Activated CD4-positive, alpha-beta memory T cell treated with anti-CD3 and anti-CD28 coated beads for 36 hours (primary cell): ENCODE measurements at regions of chr2 and their contacts with region 1.

Region 1: DNA sequence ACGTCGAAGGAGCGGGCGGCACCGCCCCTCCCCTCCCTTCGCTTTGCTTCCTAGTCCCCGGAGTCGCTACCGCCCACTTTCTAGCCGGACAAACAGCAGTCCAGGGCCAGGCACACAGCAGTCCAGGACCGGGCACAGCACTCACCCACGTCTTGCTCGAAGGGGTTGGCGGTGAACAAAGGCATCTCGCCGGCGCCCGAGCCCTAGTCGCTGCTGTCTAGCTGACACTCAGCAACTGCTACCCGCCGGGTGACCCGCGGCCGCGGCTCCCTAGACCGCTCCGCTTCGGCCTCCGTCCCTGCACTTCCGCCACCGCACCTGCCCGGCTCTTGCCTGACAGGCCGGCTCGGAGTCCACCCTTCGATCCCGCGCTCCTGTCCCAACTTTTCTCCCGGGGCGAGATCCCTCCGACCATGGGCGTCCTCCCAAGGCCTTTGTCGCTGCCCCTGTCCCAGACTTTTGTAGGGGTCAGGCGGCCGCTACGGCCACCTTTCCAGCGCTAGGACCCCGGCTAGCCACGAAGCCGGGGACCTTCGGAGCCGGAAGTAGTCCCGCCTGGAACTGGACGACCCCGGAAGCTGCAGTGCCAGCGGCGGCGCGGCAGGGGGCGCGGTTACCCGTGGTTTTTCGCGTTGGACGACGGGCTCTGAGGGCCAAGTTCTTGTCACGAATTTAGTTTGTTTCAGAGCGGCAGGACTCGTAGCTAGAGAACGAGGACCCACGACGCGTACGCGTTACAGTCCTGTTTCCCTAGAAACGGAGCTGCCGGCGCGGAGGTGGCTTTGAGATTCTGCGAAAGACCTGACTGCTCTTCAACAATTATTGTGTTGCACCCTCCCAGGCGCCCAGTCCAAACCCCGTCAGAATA is at the start of gene STAM2:
- DNase-seq: peak; percentile 96
- H3K4me3 Mint-ChIP-seq: peak within 1 kb of the TSS; percentile 96
- H3K27ac Mint-ChIP-seq: peak within 1 kb of the TSS; percentile 99
- H3K4me1 Mint-ChIP-seq: peaks cover 26% of the 10 kb centered on the region
- H3K27me3 Mint-ChIP-seq: peaks cover 3% of the 10 kb centered on the region
- total RNA-seq, gene STAM2: 16.4 to 17.6 TPM

Region 2: GRCh38 chr2:151289369-151290088 is 886.2 kb before region 1 on chr2 and contains the start of gene NMI:
- CTCF ChIA-PET with region 1: no interaction called
- POLR2A ChIA-PET with region 1: no interaction called
- intact Hi-C with region 1: loop called (anchors 10 kb)
- DNase-seq: peak; percentile 77
- H3K4me3 Mint-ChIP-seq: peak within 1 kb of the TSS; percentile 95
- H3K27ac Mint-ChIP-seq: peak within 1 kb of the TSS; percentile 97
- H3K4me1 Mint-ChIP-seq: peaks cover 40% of the 10 kb centered on the region
- H3K27me3 Mint-ChIP-seq: peaks cover 1% of the 10 kb centered on the region
- total RNA-seq, gene NMI: 32.3 to 34.4 TPM

Region 3: DNA sequence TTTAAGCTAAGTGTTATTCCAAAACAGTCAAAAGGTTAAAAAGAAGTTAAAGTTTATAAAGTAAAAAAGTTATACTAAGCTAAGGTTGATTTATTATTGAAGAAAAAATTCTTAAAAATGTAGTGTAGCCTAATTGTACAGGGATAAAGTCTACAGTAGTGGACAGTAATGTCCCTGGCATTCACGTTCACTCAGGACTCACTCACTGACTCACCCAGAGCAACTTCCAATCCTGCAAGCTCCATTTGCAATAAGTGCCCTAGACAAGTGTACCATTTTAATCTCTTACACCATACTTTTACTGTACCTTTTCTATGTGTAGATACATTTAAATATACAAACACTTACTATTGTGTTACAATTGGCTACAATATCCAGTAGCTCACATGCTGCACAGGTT is 163.0 kb before region 1 on chr2:
- CTCF ChIA-PET with region 1: no interaction called
- POLR2A ChIA-PET with region 1: no interaction called
- intact Hi-C with region 1: no loop called
- DNase-seq: no peak
- H3K4me3 Mint-ChIP-seq: no peak overlapping the region
- H3K27ac Mint-ChIP-seq: no peak overlapping the region
- H3K4me1 Mint-ChIP-seq: no peaks in the 10 kb centered on the region
- H3K27me3 Mint-ChIP-seq: peaks cover 9% of the 10 kb centered on the region

Region 4: DNA sequence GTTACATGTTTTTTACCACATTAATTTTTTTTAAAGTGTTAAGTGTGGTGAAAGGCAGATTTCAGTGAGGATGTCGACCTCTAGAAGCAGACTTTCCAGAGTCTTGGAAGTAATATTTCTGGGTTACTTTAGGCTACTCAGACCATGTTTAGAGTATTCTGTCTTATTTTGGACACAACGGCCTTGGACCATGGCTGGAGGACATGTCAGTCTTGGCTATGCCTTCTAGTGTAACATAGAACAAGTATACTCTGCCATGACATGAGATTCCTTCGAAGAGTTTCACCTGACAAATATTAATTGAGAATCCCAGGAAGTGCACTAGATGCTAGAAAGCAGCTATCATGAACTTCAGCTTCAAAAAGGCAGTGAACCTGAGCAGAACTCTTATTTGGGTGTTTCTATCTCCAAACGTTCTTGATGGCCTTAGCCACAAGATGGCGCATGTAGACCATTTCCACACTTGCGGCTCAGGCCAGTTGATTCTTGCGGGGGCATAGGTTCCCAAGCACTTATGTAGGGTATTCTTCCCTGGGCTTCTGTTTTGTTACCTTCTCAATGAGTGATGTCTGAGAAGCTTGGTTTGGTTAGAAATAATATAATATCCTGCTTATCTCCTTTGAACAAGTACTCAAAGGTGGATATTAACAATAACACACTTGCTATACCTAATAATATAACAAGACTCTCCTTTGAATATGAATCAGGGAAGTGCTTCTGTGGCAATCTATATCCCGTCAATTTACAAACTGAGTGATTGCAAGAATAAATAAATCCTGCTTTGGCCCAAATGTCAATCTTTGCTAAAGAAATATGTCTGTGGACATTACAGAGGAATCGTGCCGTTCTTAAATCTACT is 138.9 kb before region 1 on chr2:
- CTCF ChIA-PET with region 1: interaction called, 4 read pairs
- POLR2A ChIA-PET with region 1: no interaction called
- intact Hi-C with region 1: loop called (anchors 1 kb)
- DNase-seq: peak; percentile 69
- H3K4me3 Mint-ChIP-seq: no peak overlapping the region
- H3K27ac Mint-ChIP-seq: no peak overlapping the region
- H3K4me1 Mint-ChIP-seq: no peaks in the 10 kb centered on the region
- H3K27me3 Mint-ChIP-seq: no peaks in the 10 kb centered on the region

Region 5: DNA sequence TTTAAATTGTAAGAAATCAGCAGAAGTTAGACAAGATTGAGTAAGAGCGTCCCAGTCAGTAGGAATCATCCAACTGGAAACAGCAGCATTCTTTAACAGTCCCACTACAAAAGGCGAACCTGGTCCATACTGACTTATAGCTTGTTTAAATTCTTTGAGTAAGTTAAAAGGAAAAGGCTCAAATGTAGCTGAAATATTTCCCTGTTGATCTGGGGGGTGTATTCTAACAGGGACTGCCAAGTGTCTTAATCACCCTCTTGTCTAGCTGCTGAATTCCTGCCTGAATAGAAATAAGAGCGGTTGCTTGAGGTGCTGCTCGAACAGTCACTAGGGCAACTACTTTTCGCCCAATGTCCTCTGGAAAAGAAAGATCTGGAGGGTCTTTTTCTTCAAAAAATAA is 102.8 kb after region 1 on chr2:
- CTCF ChIA-PET with region 1: no interaction called
- POLR2A ChIA-PET with region 1: no interaction called
- intact Hi-C with region 1: no loop called
- DNase-seq: no peak
- H3K4me3 Mint-ChIP-seq: no peak overlapping the region
- H3K27ac Mint-ChIP-seq: no peak overlapping the region
- H3K4me1 Mint-ChIP-seq: no peaks in the 10 kb centered on the region
- H3K27me3 Mint-ChIP-seq: no peaks in the 10 kb centered on the region

Region 6: GRCh38 chr2:152335010-152335725 is 159.5 kb after region 1 on chr2 and contains the start of gene FMNL2:
- CTCF ChIA-PET with region 1: no interaction called
- POLR2A ChIA-PET with region 1: no interaction called
- intact Hi-C with region 1: loop called (anchors 2 kb)
- DNase-seq: peak; percentile 68
- H3K4me3 Mint-ChIP-seq: peak within 1 kb of the TSS; percentile 72
- H3K27ac Mint-ChIP-seq: no peak within 1 kb of the TSS
- H3K4me1 Mint-ChIP-seq: peaks cover 13% of the 10 kb centered on the region
- H3K27me3 Mint-ChIP-seq: peaks cover 41% of the 10 kb centered on the region
- total RNA-seq, gene FMNL2: 2.2 TPM

Region 7: DNA sequence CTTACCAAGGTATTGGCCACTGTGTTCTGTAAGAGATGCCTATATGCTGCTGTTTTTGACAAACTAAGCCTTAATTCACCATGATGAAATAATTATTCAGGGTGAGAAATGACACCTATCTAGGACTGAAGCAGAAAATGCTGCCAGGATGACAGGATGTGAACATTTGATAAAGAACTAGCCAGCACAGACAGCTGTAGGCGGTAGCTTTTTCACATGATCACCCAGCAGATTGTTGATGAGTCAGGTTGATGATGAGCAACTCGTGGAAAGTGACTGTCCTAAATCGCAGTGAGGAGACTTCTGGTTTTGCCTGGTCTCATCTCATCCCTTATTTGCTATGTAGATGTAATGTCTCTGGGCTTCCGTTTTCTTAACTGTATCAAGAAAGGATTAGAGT is 397.5 kb after region 1 on chr2:
- CTCF ChIA-PET with region 1: interaction called, 3 read pairs
- POLR2A ChIA-PET with region 1: no interaction called
- intact Hi-C with region 1: loop called (anchors 1 kb)
- DNase-seq: peak; percentile 70
- H3K4me3 Mint-ChIP-seq: no peak overlapping the region
- H3K27ac Mint-ChIP-seq: peak overlapping the region; percentile 35
- H3K4me1 Mint-ChIP-seq: peaks cover 10% of the 10 kb centered on the region
- H3K27me3 Mint-ChIP-seq: peaks cover 14% of the 10 kb centered on the region

Region 8: DNA sequence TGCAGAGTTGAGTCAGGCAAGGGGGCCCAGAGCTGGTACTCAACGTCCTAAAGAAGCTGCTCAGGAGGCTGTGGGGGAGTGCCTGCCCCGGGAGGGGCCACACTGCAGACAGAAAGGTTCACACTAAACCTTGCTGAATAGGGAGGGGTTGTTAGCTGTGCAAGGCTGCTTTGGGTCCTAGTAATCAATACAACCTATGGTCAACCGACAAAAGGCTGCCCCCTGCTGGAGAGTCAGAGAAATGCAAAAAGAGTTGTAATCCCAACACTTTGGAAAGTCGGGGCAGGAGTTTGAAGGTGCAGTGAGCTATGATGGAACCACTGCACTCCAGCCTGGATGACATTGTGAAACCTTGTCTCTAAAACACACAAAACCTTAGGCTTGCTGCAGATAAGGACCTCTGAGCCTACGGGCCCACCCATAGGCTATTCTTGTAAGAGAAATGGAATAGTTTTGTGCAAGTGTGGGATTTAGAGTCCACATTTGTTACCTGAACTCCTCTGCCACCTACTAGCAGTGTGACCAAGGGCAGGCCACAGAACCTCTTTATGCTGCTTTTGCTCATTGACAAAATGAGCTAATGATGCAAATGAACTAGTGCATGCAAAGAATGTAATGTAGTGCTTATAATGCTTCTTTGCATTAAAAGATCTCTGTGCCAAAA is 460.1 kb after region 1 on chr2:
- CTCF ChIA-PET with region 1: interaction called, 63 read pairs
- POLR2A ChIA-PET with region 1: interaction called, 5 read pairs
- intact Hi-C with region 1: loop called (anchors 1 kb)
- DNase-seq: peak; percentile 69
- H3K4me3 Mint-ChIP-seq: no peak overlapping the region
- H3K27ac Mint-ChIP-seq: no peak overlapping the region
- H3K4me1 Mint-ChIP-seq: no peaks in the 10 kb centered on the region
- H3K27me3 Mint-ChIP-seq: peaks cover 7% of the 10 kb centered on the region